Caco-2 (cell line): ENCODE measurements at regions of chr7 and their contacts with region 1.

Region 1: GRCh38 chr7:41940760-41941343 is 238.0 kb upstream of the INHBA start:
- DNase-seq: peak; percentile 69 to 76
- H3K4me3 ChIP-seq: no peak overlapping the region
- H3K4me3 Mint-ChIP-seq: no peak overlapping the region
- H3K27ac Mint-ChIP-seq: no peak overlapping the region
- H3K4me1 ChIP-seq: peaks cover 21% of the 10 kb centered on the region
- H3K4me1 Mint-ChIP-seq: peaks cover 19% of the 10 kb centered on the region
- H3K27me3 ChIP-seq: no peaks in the 10 kb centered on the region
- H3K27me3 Mint-ChIP-seq: peaks cover 16% of the 10 kb centered on the region
- CTCF ChIP-seq: peak; percentile 83 to 85

Region 2: GRCh38 chr7:41977151-41977651 is 36.3 kb after region 1 on chr7:
- CTCF ChIA-PET with region 1: interaction called, 10 read pairs
- POLR2A ChIA-PET with region 1: no interaction called
- intact Hi-C with region 1: loop called (anchors 1 kb)
- DNase-seq: peak in 1 of 2 experiments; percentile 25
- H3K4me3 ChIP-seq: no peak overlapping the region
- H3K4me3 Mint-ChIP-seq: no peak overlapping the region
- H3K27ac Mint-ChIP-seq: no peak overlapping the region
- H3K4me1 ChIP-seq: no peaks in the 10 kb centered on the region
- H3K4me1 Mint-ChIP-seq: no peaks in the 10 kb centered on the region
- H3K27me3 ChIP-seq: peaks cover 1% of the 10 kb centered on the region; the same call in 1 of the 2 replicates
- H3K27me3 Mint-ChIP-seq: peaks cover 19% of the 10 kb centered on the region
- CTCF ChIP-seq: peak; percentile 74 to 78

Region 3: DNA sequence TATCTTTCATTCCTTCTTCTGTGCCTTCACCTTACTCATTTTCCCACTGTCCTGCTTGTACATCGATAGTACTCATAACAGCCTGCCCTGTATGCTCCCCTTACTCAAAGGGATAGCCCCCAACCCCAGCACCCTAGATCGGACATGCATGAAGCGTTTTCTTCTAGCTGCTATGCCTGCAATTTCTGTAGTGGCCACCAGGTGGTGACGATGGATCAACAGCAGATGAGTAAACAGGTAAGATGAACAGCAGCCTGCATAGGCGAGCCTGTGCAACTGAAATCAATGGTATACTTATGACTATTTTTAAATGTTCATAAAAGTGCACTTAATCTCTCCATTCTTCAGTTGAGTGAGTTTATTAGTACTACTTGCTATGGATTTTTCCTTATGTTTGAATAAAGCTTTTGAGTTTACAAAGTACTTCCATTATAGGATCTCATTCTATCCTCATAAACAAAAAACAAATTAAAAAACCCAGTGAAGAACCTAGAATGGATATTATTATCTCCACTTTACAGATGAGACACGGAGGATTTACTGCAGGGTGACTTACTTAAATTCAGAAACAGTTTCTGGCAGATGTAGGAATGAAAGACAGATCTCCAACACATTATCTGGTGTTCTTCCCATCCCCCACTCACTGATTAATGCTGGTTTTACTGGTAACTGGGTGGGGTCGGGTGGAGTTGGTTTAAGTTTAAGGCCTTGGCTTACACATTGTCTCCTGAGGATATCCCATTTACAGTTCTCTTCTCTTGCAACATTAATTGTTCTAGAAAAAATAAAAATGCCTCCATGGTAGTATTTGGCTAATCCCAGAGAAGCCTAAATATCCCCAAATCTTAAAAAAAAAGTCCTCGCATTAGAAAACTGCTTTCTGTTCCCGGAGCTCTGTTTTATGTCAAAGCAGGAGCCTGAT is 74.0 kb after region 1 on chr7:
- CTCF ChIA-PET with region 1: no interaction called
- POLR2A ChIA-PET with region 1: no interaction called
- intact Hi-C with region 1: no loop called
- DNase-seq: peak; percentile 40 to 43
- H3K4me3 ChIP-seq: no peak overlapping the region
- H3K4me3 Mint-ChIP-seq: no peak overlapping the region
- H3K27ac Mint-ChIP-seq: no peak overlapping the region
- H3K4me1 ChIP-seq: no peaks in the 10 kb centered on the region
- H3K4me1 Mint-ChIP-seq: no peaks in the 10 kb centered on the region
- H3K27me3 ChIP-seq: no peaks in the 10 kb centered on the region
- H3K27me3 Mint-ChIP-seq: peaks cover 19% of the 10 kb centered on the region
- CTCF ChIP-seq: peak; percentile 56 to 79

Region 4: GRCh38 chr7:42091461-42092291 is 150.8 kb after region 1 on chr7:
- CTCF ChIA-PET with region 1: interaction called, 3 read pairs
- POLR2A ChIA-PET with region 1: interaction called, 3 read pairs
- intact Hi-C with region 1: loop called (anchors 5 kb)
- DNase-seq: peak; percentile 21 to 71
- H3K4me3 ChIP-seq: no peak overlapping the region
- H3K4me3 Mint-ChIP-seq: peak overlapping the region; percentile 31
- H3K27ac Mint-ChIP-seq: no peak overlapping the region
- H3K4me1 ChIP-seq: peaks cover 14% of the 10 kb centered on the region
- H3K4me1 Mint-ChIP-seq: peaks cover 8% of the 10 kb centered on the region
- H3K27me3 ChIP-seq: no peaks in the 10 kb centered on the region; the same call in none of the 2 replicates
- H3K27me3 Mint-ChIP-seq: peaks cover 5% of the 10 kb centered on the region
- CTCF ChIP-seq: no peak

Region 5: GRCh38 chr7:42639929-42640328 is 699.1 kb after region 1 on chr7:
- CTCF ChIA-PET with region 1: no interaction called
- POLR2A ChIA-PET with region 1: no interaction called
- intact Hi-C with region 1: loop called (anchors 10 kb)
- DNase-seq: no peak
- H3K4me3 ChIP-seq: no peak overlapping the region
- H3K4me3 Mint-ChIP-seq: no peak overlapping the region
- H3K27ac Mint-ChIP-seq: no peak overlapping the region
- H3K4me1 ChIP-seq: no peaks in the 10 kb centered on the region
- H3K4me1 Mint-ChIP-seq: no peaks in the 10 kb centered on the region
- H3K27me3 ChIP-seq: no peaks in the 10 kb centered on the region
- H3K27me3 Mint-ChIP-seq: no peaks in the 10 kb centered on the region
- CTCF ChIP-seq: peak in 1 of 2 experiments; percentile 13

Region 6: GRCh38 chr7:42831718-42832431 is 891.0 kb after region 1 on chr7:
- CTCF ChIA-PET with region 1: interaction called, 14 read pairs
- POLR2A ChIA-PET with region 1: no interaction called
- intact Hi-C with region 1: loop called (anchors 1 kb)
- DNase-seq: peak; percentile 34 to 41
- H3K4me3 ChIP-seq: no peak overlapping the region
- H3K4me3 Mint-ChIP-seq: no peak overlapping the region
- H3K27ac Mint-ChIP-seq: no peak overlapping the region
- H3K4me1 ChIP-seq: no peaks in the 10 kb centered on the region
- H3K4me1 Mint-ChIP-seq: no peaks in the 10 kb centered on the region
- H3K27me3 ChIP-seq: no peaks in the 10 kb centered on the region
- H3K27me3 Mint-ChIP-seq: peaks cover 19% of the 10 kb centered on the region
- CTCF ChIP-seq: peak; percentile 38 to 79

Region 7: DNA sequence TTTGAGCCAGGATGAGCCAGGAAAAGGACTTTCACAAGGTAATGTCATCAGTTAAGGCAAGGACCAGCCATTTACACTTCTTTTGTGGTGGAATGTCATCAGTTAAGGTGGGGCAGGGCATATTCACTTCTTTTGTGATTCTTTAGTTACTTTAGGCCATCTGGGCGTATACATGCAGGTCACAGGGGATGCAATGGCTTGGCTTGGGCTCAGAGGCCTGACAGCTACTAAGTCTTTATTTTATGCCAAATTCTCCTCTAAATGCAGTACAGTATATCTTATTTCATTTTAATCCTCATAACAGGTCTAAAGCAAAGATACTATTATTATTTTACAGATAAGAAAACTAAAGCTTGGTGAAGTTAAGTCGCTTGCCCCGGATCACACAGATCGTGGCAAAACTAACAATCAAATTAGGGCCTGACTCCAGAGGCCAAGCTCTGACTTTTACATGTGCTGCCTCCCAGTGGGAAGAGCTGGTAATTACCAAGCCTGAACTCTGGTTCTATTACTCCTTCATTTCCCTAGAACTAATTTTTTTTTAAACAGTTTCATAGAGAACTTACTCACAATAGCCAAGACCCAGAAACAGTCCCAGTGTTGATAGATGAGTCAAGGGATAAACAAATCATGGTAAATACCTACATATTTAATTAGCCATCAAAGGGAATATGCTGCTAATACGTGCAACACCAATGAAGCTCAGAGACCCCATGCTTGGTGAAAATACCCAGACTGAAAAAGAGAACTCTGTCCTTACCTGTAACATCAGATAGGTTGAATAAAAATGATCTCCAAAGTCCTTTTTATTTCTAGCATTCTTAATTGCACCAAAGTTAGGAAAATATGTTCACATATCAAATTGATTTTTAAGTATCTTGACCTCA is 935.6 kb after region 1 on chr7:
- CTCF ChIA-PET with region 1: interaction called, 15 read pairs
- POLR2A ChIA-PET with region 1: no interaction called
- intact Hi-C with region 1: loop called (anchors 2 kb)
- DNase-seq: peak in 1 of 2 experiments; percentile 67
- H3K4me3 ChIP-seq: no peak overlapping the region
- H3K4me3 Mint-ChIP-seq: no peak overlapping the region
- H3K27ac Mint-ChIP-seq: no peak overlapping the region
- H3K4me1 ChIP-seq: no peaks in the 10 kb centered on the region
- H3K4me1 Mint-ChIP-seq: no peaks in the 10 kb centered on the region
- H3K27me3 ChIP-seq: no peaks in the 10 kb centered on the region
- H3K27me3 Mint-ChIP-seq: peaks cover 4% of the 10 kb centered on the region
- CTCF ChIP-seq: peak; percentile 67 to 69